BJ (cell line): ENCODE measurements at regions of chr19 and their contacts with region 1.

Region 1: GRCh38 chr19:4742723-4743646 is 19.3 kb upstream of the DPP9 start:
- DNase-seq: no peak
- H3K4me3 ChIP-seq: no peak overlapping the region
- H3K27me3 ChIP-seq: peaks cover 4% of the 10 kb centered on the region
- CTCF ChIP-seq: no peak

Region 2: GRCh38 chr19:4803736-4804695 is 61.0 kb after region 1 on chr19:
- CTCF ChIA-PET with region 1: interaction called, 19 read pairs
- POLR2A ChIA-PET with region 1: no interaction called
- DNase-seq: no peak
- H3K4me3 ChIP-seq: no peak overlapping the region
- H3K27me3 ChIP-seq: no peaks in the 10 kb centered on the region
- CTCF ChIP-seq: peak; percentile 85